GM10248 (cell line): ENCODE measurements at regions of chr10 and their contacts with region 1.

Region 1: GRCh38 chr10:13371897-13372470 is 23.9 kb upstream of the SEPHS1 start:
- DNase-seq: peak; percentile 85
- CTCF ChIP-seq: peak; percentile 86

Region 2: DNA sequence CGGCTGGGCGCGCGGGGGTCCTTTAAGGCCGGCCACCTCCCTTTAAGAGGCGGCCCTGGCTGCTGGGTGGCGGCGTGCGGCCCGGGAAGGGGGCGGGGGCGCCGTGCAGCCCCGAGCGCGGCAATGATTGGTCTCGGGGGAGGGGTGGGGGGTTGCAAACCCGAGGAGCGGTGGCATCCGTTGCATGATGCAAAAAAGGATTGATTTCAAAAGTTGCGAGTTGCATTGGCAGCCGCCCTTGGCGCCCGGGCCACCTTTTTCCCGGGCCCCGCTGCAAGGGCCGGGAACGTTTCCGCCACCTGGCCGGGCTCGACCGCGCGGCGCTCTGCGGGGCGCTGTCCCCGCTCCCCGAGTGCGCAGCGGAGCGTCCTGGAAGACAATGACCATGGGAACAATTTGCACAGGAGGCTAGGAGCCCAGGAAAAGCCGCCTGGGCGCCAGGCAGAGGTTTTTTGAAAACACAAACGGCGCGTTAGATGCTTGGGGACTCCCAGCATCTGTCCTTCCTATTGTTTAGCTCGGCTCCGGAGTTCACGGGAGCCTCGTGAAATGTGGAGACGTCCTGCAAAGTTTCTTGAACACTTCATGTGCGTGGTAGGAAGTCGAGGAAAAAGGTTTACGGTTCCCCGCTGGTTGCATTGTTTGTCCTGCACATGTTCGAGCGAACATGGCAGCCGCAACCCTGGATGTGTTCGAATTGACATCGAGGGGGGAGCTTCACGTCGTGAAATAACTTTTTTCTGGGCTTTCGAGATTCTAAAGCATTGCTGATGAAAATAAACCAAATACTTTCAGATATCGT is 23.6 kb before region 1 on chr10 and contains the start of gene SEPHS1:
- CTCF ChIA-PET with region 1: interaction called, 14 read pairs
- POLR2A ChIA-PET with region 1: no interaction called
- DNase-seq: peak; percentile 87
- CTCF ChIP-seq: no peak

Region 3: DNA sequence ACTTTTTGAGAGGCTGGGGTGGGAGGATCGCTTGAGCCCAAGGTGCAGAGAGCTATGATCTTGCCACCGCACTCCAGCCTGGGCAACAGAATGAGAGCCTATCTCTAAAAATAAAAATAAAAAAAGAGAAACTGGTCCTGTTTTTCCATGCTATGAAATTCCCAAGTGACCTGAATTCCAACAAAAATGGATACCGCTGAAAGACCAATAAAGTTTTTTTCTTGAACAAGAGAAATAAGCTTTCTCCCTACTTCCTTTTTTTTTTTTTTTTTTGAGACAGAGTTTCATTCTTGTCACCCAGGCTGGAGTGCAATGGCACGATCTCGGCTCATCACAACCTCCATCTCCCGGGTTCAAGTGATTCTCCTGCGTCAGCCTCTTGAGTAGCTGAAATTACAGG is 11.4 kb before region 1 on chr10:
- CTCF ChIA-PET with region 1: interaction called, 19 read pairs
- POLR2A ChIA-PET with region 1: no interaction called
- DNase-seq: no peak
- CTCF ChIP-seq: no peak

Region 4: DNA sequence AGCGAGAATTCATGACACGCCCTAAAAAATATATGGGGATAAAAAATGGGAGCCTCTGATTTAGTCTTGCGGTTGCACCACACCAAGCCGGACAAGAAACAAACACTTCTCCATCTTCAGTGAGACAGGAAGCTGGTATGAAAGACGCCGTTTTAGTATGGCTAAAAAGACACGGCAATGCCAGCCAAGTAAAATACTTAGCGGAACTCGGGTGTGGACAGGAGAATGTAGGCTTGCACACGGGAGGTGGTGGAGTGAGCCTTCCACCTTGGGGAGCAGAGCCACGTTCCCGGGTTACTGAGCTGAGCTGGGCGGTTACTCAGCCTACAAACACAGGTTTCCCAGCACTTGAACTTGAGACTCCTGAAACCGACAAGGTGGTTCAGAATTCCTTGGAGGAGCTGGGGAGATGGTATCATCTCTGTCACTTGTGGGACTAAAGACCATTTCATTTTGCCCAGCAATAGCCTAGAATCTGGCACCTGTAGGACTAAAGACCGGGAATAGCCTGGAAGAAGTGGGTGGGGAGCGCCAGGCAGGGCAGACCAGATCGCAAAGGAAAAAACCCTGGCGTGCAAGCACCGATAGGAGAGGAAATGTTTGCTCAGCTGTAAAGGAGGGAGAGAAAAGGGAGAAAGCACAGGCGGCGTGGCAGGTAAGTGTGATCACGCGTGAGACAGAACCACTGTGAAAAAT is 10.9 kb after region 1 on chr10:
- CTCF ChIA-PET with region 1: interaction called, 23 read pairs
- POLR2A ChIA-PET with region 1: no interaction called
- DNase-seq: no peak
- CTCF ChIP-seq: no peak

Region 5: GRCh38 chr10:13440185-13441061 is 68.4 kb after region 1 on chr10:
- CTCF ChIA-PET with region 1: interaction called, 39 read pairs
- POLR2A ChIA-PET with region 1: no interaction called
- DNase-seq: peak; percentile 83
- CTCF ChIP-seq: peak; percentile 75

Region 6: DNA sequence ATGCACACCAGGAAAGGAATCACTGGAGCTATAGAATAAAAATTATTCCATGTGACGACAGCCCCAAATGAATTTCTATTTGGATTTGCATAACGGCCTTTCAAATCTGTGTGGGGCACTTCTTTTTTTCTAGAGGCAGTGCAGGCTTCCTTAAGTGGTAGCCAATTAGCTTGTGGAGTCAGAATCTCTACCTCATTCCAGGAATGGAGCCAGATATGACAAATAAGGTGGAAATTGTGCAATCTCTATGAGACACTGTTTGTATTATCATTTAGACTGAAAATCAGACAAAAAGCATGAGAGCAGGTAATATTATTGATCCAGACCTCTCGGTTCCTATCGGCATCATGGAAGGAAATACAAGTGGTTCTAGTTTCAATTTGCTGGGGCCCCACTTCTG is 78.1 kb after region 1 on chr10:
- CTCF ChIA-PET with region 1: interaction called, 16 read pairs
- POLR2A ChIA-PET with region 1: no interaction called
- DNase-seq: no peak
- CTCF ChIP-seq: no peak

Region 7: GRCh38 chr10:13536674-13537366 is 164.8 kb after region 1 on chr10:
- CTCF ChIA-PET with region 1: interaction called, 25 read pairs
- POLR2A ChIA-PET with region 1: no interaction called
- DNase-seq: peak; percentile 62
- CTCF ChIP-seq: peak; percentile 58